ENCODE measurements at regions of chr2 and their contacts with region 1.

Region 1: DNA sequence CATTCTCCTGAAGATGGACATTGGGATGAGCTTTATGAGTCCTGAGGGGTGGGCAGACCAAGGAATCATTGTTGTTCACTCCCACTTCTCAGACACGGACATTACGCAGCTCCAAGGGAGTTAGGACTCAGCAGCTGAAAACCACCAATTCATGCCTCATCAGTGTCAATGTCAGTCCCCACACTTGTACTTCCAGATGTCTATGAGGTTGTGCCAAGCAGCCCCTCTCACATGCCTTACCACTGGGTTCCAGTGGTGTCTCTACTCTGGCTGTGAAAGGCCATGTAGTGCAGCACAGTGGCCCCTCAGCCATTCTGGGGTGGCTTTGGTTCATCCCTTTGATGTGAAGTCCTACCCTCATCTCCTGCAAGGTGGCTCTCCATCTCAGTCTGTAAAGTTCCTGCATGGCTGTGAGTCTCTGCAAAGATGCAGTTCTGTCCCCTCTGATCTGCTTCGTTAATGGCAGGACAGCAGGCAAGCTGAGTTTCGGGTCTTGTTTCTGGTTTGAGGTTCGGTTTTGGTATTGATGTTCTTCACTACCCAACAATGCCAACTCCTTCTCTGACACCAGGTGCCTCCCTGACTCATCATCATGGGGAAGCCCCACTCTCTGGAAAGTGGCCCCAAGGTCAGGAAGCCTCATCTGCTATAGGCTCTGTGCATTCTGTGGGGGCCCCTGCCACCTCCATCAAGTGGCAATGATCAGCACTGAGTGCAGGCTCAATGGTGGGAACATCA is 14.0 kb upstream of the COL6A3 start:
- DNase-seq: peak; percentile 95
- ATAC-seq: peak; percentile 79
- H3K4me3 Mint-ChIP-seq: peak overlapping the region; percentile 36
- H3K27ac Mint-ChIP-seq: peak overlapping the region; percentile 93
- H3K4me1 Mint-ChIP-seq: peaks cover 71% of the 10 kb centered on the region
- H3K27me3 Mint-ChIP-seq: peaks cover 1% of the 10 kb centered on the region
- CTCF ChIP-seq: no peak

Region 2: DNA sequence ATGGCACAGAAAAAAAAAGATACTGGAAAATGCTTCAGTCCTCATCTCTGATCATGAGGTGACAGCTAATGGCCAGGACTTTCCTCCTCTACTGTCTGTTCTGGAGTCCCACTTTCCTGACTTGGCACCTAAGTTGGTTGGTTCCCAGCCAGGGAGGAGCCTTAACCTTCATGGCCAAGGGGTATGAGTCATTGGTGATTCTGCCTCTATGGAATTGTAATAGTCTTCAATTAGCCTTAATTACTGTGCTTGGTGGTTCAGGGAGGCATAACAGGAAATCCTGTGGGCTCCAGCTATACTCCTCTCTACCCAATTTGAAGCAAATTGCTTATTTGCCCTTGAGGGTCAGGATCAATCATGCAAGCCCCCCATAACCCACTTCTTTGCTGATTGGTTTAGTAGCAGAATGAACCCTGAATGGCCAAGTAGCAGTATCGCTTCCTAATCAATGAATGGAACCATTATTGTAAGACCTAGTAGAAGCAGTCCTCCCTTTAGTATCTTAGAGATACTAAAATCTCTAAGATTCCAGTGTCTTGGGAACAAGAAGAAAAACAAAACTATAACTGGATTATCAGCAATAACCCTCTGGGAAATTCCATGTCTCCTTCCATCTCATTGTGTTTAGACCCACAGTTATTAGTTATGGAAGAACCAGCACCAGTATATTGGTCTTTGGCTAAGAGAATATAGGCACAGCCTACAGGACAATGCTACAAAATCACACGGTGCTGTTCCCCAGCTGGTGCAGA is 123.0 kb before region 1 on chr2:
- CTCF ChIA-PET with region 1: no interaction called
- POLR2A ChIA-PET with region 1: no interaction called
- intact Hi-C with region 1: no loop called
- DNase-seq: no peak
- ATAC-seq: no peak
- H3K4me3 Mint-ChIP-seq: no peak overlapping the region
- H3K27ac Mint-ChIP-seq: no peak overlapping the region
- H3K4me1 Mint-ChIP-seq: no peaks in the 10 kb centered on the region
- H3K27me3 Mint-ChIP-seq: peaks cover 7% of the 10 kb centered on the region
- CTCF ChIP-seq: no peak

Region 3: GRCh38 chr2:237441605-237442274 is 13.8 kb after region 1 on chr2:
- CTCF ChIA-PET with region 1: interaction called, 34 read pairs
- POLR2A ChIA-PET with region 1: interaction called, 32 read pairs
- intact Hi-C with region 1: loop called (anchors 1 kb)
- DNase-seq: peak; percentile 55
- ATAC-seq: peak; percentile 65
- H3K4me3 Mint-ChIP-seq: peak overlapping the region; percentile 24
- H3K27ac Mint-ChIP-seq: peak overlapping the region; percentile 78
- H3K4me1 Mint-ChIP-seq: peaks cover 55% of the 10 kb centered on the region
- H3K27me3 Mint-ChIP-seq: no peaks in the 10 kb centered on the region
- CTCF ChIP-seq: no peak

Measured in activated CD8-positive, alpha-beta T cell treated with anti-CD3 and anti-CD28 coated beads for 36 hours (primary cell).